T-cell (primary cell): ENCODE measurements at regions of chr10 and their contacts with region 1.

Region 1: GRCh38 chr10:47047671-47048525 is 136.7 kb downstream of the PTPN20 start:
- DNase-seq: peak; percentile 24 to 84 (median 60)
- ATAC-seq: peak; percentile 54 to 71 (median 64)
- H3K4me3 ChIP-seq: no peak overlapping the region
- H3K4me3 Mint-ChIP-seq: no peak overlapping the region
- H3K27ac ChIP-seq: no peak overlapping the region
- H3K27ac Mint-ChIP-seq: peak overlapping the region; percentile 30 to 50
- H3K4me1 ChIP-seq: peaks cover 0 to 17% of the 10 kb centered on the region in 2 experiments
- H3K4me1 Mint-ChIP-seq: peaks cover 20 to 21% (median 20%) of the 10 kb centered on the region in 3 donors
- H3K27me3 ChIP-seq: peaks cover 0 to 7% of the 10 kb centered on the region in 2 experiments
- H3K27me3 Mint-ChIP-seq: no peaks in the 10 kb centered on the region

Region 2: GRCh38 chr10:47013507-47014154 is 34.3 kb before region 1 on chr10:
- CTCF ChIA-PET with region 1: no interaction called
- POLR2A ChIA-PET with region 1: interaction called in 1 of 2 experiments, 10 read pairs
- DNase-seq: no peak
- ATAC-seq: no peak
- H3K4me3 ChIP-seq: no peak overlapping the region
- H3K4me3 Mint-ChIP-seq: no peak overlapping the region
- H3K27ac ChIP-seq: no peak overlapping the region
- H3K27ac Mint-ChIP-seq: no peak overlapping the region
- H3K4me1 ChIP-seq: no peaks in the 10 kb centered on the region
- H3K4me1 Mint-ChIP-seq: no peaks in the 10 kb centered on the region
- H3K27me3 ChIP-seq: peaks cover 0 to 14% of the 10 kb centered on the region in 2 experiments
- H3K27me3 Mint-ChIP-seq: peaks cover 4 to 5% of the 10 kb centered on the region in 2 donors

Region 3: GRCh38 chr10:47024399-47025252 is 23.3 kb before region 1 on chr10:
- CTCF ChIA-PET with region 1: interaction called, 3 to 21 read pairs
- POLR2A ChIA-PET with region 1: no interaction called
- DNase-seq: peak; percentile 26 to 79 (median 54)
- ATAC-seq: peak; percentile 63 to 86 (median 80)
- H3K4me3 ChIP-seq: no peak overlapping the region
- H3K4me3 Mint-ChIP-seq: no peak overlapping the region
- H3K27ac ChIP-seq: no peak overlapping the region
- H3K27ac Mint-ChIP-seq: peak overlapping the region in 1 of 2 donors; percentile 22
- H3K4me1 ChIP-seq: peaks cover 0 to 8% of the 10 kb centered on the region in 2 experiments
- H3K4me1 Mint-ChIP-seq: peaks cover 0 to 4% (median 2%) of the 10 kb centered on the region in 3 donors
- H3K27me3 ChIP-seq: peaks cover 0 to 3% of the 10 kb centered on the region in 2 experiments
- H3K27me3 Mint-ChIP-seq: peaks cover 1 to 5% of the 10 kb centered on the region in 2 donors

Region 4: GRCh38 chr10:47311932-47312662 is 264.2 kb after region 1 on chr10:
- CTCF ChIA-PET with region 1: interaction called, 45 to 52 read pairs
- POLR2A ChIA-PET with region 1: interaction called in 1 of 2 experiments, 4 read pairs
- DNase-seq: peak; percentile 62 to 88 (median 76)
- ATAC-seq: peak; percentile 74 to 83 (median 79)
- H3K4me3 ChIP-seq: peak overlapping the region in 1 of 2 donors; percentile 11
- H3K4me3 Mint-ChIP-seq: peak overlapping the region; percentile 13 to 68 (median 22)
- H3K27ac ChIP-seq: peak overlapping the region; percentile 40
- H3K27ac Mint-ChIP-seq: peak overlapping the region; percentile 86 to 91
- H3K4me1 ChIP-seq: peaks cover 6 to 39% of the 10 kb centered on the region in 2 experiments
- H3K4me1 Mint-ChIP-seq: peaks cover 32 to 39% (median 36%) of the 10 kb centered on the region in 3 donors
- H3K27me3 ChIP-seq: no peaks in the 10 kb centered on the region
- H3K27me3 Mint-ChIP-seq: no peaks in the 10 kb centered on the region